ENCODE measurements at regions of chr11 and their contacts with region 1.

Region 1: GRCh38 chr11:250740-251299 is 14.0 kb downstream of the PSMD13 start:
- DNase-seq: peak; percentile 51 to 94
- H3K4me3 ChIP-seq: no peak overlapping the region
- H3K27ac ChIP-seq: no peak overlapping the region
- H3K4me1 ChIP-seq: no peaks in the 10 kb centered on the region
- H3K27me3 ChIP-seq: no peaks in the 10 kb centered on the region; a peak in 1 of 7 replicates
- CTCF ChIP-seq: peak; percentile 82 to 94 (median 85)
- EP300 ChIP-seq: no peak
- POLR2A ChIP-seq: no peak
- RAD21 ChIP-seq: peak; percentile 86 to 88

Region 2: DNA sequence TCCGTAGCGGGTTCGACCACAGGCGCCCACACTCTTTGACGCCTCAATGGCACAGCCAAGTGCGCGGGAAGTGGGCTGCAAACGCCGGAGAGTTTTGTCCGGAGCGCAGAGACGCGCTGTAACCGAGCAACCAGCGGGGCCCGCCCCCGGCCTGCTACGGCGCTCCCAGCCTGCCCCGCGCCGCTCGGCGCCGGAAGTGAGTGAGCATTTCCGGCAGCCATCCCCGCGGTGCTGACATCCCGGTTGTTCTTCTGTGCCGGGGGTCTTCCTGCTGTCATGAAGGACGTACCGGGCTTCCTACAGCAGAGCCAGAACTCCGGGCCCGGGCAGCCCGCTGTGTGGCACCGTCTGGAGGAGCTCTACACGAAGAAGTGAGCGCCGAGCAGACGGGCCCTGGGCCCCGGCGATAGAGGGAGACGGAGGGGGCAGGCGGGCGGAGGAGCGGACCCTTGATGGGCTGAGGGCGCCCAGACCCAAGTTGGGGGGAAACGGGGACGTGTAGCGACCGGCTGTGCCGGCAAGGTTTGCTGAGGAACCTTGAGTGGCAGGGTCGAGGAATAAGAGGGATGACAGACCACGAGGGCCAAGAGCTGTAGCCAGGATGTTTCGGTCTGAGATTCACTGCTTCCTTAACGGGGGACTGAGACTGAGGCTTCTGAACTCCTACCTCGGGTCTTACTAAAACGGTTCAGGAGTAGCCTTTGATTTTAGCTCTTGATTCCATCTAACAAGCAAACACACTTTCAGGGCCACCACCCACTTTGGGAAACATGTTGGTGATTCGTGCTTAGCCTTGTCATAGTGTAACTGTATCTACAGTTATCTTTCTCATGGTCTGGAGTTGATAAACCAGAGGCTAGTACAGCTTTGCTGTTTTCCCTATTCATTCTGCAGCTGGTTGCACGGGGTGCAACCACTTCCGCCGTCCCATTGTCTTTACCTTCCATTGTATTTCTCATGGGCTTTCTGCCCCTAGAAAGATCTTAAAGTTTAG is 13.7 kb before region 1 on chr11 and contains the start of gene PSMD13:
- CTCF ChIA-PET with region 1: interaction called, 88 read pairs
- POLR2A ChIA-PET with region 1: interaction called, 5 read pairs
- DNase-seq: peak in 1 of 2 experiments; percentile 87
- H3K4me3 ChIP-seq: peak within 1 kb of the TSS; percentile 96 to 98 (median 96)
- H3K27ac ChIP-seq: peak within 1 kb of the TSS; percentile 71; the same call in 1 of the 2 replicates
- H3K4me1 ChIP-seq: no peaks in the 10 kb centered on the region; a peak in 1 of 7 replicates
- H3K27me3 ChIP-seq: no peaks in the 10 kb centered on the region
- CTCF ChIP-seq: no peak
- EP300 ChIP-seq: no peak
- POLR2A ChIP-seq: peak in 1 of 2 experiments; percentile 18; a peak in 1 of 3 replicates
- RAD21 ChIP-seq: no peak
- total RNA-seq, gene PSMD13: 136 and 141 TPM in 2 replicates

Region 3: DNA sequence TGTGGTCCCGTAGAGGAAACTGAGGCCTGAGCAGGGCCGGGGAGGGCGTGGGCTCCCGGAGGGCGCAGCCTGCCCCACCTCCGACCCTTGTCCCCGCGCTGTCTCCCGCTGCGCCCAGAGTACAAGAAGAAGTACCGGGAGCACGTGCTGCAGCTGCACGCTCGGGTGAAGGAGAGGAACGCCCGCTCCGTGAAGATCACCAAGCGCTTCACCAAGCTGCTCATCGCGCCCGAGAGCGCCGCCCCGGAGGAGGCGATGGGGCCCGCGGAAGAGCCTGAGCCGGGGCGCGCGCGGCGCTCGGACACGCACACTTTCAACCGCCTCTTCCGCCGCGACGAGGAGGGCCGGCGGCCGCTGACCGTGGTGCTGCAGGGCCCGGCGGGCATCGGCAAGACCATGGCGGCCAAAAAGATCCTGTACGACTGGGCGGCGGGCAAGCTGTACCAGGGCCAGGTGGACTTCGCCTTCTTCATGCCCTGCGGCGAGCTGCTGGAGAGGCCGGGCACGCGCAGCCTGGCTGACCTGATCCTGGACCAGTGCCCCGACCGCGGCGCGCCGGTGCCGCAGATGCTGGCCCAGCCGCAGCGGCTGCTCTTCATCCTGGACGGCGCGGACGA is 29.3 kb after region 1 on chr11:
- CTCF ChIA-PET with region 1: interaction called, 88 read pairs
- POLR2A ChIA-PET with region 1: interaction called, 5 read pairs
- DNase-seq: peak in 1 of 2 experiments; percentile 49
- H3K4me3 ChIP-seq: no peak overlapping the region
- H3K27ac ChIP-seq: no peak overlapping the region
- H3K4me1 ChIP-seq: peaks cover 0 to 5% (median under 1%) of the 10 kb centered on the region in 4 experiments; a peak in 5 of 7 replicates
- H3K27me3 ChIP-seq: peaks cover 0 to 3% (median 1%) of the 10 kb centered on the region in 4 experiments; a peak in 2 of 7 replicates
- CTCF ChIP-seq: no peak
- EP300 ChIP-seq: no peak
- POLR2A ChIP-seq: no peak
- RAD21 ChIP-seq: no peak

Region 4: GRCh38 chr11:299951-300735 is 49.3 kb after region 1 on chr11:
- CTCF ChIA-PET with region 1: interaction called, 52 read pairs
- POLR2A ChIA-PET with region 1: interaction called, 4 read pairs
- DNase-seq: no peak
- H3K4me3 ChIP-seq: no peak overlapping the region
- H3K27ac ChIP-seq: no peak overlapping the region
- H3K4me1 ChIP-seq: peaks cover 6 to 29% (median 15%) of the 10 kb centered on the region in 4 experiments
- H3K27me3 ChIP-seq: no peaks in the 10 kb centered on the region; a peak in 1 of 7 replicates
- CTCF ChIP-seq: peak in 2 of 3 experiments; percentile 11 to 51; a peak in 3 of 4 replicates
- EP300 ChIP-seq: no peak
- POLR2A ChIP-seq: peak in 1 of 2 experiments; percentile 34; a peak in 1 of 3 replicates
- RAD21 ChIP-seq: peak; percentile 12 to 42; a peak in 1 of 4 replicates

Region 5: DNA sequence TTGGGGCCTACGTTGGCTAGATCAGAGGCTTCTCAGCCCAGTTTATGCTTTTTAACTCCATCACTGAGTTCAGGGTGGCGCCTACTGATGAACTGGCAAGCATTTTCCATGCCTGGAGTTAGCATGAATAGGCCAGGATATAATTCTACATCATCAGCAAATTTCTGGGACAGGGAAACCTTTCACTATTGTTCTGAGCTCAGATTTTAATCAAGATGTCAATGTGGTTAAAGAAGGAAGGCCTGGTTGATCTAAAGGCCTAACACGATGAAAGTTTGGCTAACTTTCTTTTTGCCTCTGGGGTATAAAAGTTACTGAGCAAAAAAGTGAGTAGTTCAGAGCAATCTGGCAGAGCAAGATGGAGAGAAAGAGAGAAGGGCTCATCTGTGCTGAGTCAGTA is 91.5 kb after region 1 on chr11:
- CTCF ChIA-PET with region 1: interaction called, 22 read pairs
- POLR2A ChIA-PET with region 1: interaction called, 3 read pairs
- DNase-seq: no peak
- H3K4me3 ChIP-seq: no peak overlapping the region
- H3K27ac ChIP-seq: no peak overlapping the region
- H3K4me1 ChIP-seq: peaks cover 0 to 14% (median 9%) of the 10 kb centered on the region in 4 experiments; a peak in 5 of 7 replicates
- H3K27me3 ChIP-seq: no peaks in the 10 kb centered on the region
- CTCF ChIP-seq: no peak
- EP300 ChIP-seq: no peak
- POLR2A ChIP-seq: no peak
- RAD21 ChIP-seq: no peak